PC-9 (cell line): ENCODE measurements at regions of chr9 and their contacts with region 1.

Region 1: GRCh38 chr9:127396808-127397497 is at the start of gene SLC2A8:
- DNase-seq: peak; percentile 98 to 100
- H3K4me3 ChIP-seq: peak within 1 kb of the TSS; percentile 68
- H3K27ac ChIP-seq: no peak within 1 kb of the TSS
- H3K4me1 ChIP-seq: no peaks in the 10 kb centered on the region; the same call in 1 of the 2 replicates
- H3K27me3 ChIP-seq: no peaks in the 10 kb centered on the region
- CTCF ChIP-seq: 0 out of 2 replicates have a peak, but pooled peaks have one; percentile 12
- total RNA-seq, gene SLC2A8: 19.1 and 24.6 TPM in 2 replicates

Region 2: GRCh38 chr9:126939821-126940221 is 457.1 kb before region 1 on chr9:
- CTCF ChIA-PET with region 1: interaction called, 5 read pairs
- POLR2A ChIA-PET with region 1: no interaction called
- intact Hi-C with region 1: loop called (anchors 2 kb)
- DNase-seq: no peak
- H3K4me3 ChIP-seq: no peak overlapping the region
- H3K27ac ChIP-seq: no peak overlapping the region
- H3K4me1 ChIP-seq: no peaks in the 10 kb centered on the region
- H3K27me3 ChIP-seq: no peaks in the 10 kb centered on the region
- CTCF ChIP-seq: no peak

Region 3: GRCh38 chr9:127214421-127215267 is 182.3 kb before region 1 on chr9:
- CTCF ChIA-PET with region 1: interaction called, 11 read pairs
- POLR2A ChIA-PET with region 1: no interaction called
- intact Hi-C with region 1: loop called (anchors 1 kb)
- DNase-seq: peak; percentile 49 to 75
- H3K4me3 ChIP-seq: no peak overlapping the region
- H3K27ac ChIP-seq: no peak overlapping the region
- H3K4me1 ChIP-seq: 0 out of 2 replicates have a peak, but pooled peaks cover 4% of the 10 kb centered on the region
- H3K27me3 ChIP-seq: no peaks in the 10 kb centered on the region
- CTCF ChIP-seq: peak; percentile 89

Region 4: DNA sequence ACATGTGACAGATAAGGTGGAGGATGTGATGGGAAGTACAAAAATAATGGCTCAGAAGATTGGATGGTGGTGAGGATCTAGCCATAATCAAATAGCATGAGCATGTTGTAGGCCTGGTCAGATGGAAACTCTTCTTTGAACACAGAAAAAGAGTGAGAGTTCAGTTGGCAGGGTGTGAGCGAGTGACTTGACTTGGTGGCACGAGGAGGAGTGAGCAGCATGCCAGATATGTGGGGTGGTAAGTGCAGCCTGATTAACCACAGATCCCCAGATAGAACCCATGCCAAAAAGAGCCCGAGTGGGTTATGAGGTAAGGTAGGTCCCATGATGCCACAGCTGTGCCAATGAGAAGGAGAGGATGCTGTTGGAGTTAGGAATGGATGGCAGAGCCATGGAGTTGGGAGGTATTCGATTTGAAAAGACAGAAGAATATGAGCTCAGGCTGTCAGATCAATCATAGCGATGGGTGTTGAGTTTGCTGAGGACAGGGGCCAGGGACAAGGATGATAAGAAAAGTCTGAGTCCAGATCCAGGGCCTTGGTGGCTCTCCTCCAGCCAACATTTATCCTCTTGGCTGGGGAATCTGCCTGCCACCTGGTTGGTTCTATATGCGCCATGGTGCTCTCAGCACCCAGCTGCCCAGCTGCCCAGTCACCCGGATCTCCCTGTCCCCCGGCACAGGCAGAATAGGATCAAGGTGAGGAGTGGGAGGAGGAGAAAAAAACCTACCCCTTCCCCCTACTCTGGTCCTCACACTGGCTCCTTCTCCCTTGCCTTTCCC is 115.9 kb before region 1 on chr9:
- CTCF ChIA-PET with region 1: interaction called, 12 read pairs
- POLR2A ChIA-PET with region 1: interaction called, 4 read pairs
- intact Hi-C with region 1: no loop called
- DNase-seq: no peak
- H3K4me3 ChIP-seq: no peak overlapping the region
- H3K27ac ChIP-seq: no peak overlapping the region
- H3K4me1 ChIP-seq: peaks cover 13% of the 10 kb centered on the region
- H3K27me3 ChIP-seq: no peaks in the 10 kb centered on the region
- CTCF ChIP-seq: no peak

Region 5: DNA sequence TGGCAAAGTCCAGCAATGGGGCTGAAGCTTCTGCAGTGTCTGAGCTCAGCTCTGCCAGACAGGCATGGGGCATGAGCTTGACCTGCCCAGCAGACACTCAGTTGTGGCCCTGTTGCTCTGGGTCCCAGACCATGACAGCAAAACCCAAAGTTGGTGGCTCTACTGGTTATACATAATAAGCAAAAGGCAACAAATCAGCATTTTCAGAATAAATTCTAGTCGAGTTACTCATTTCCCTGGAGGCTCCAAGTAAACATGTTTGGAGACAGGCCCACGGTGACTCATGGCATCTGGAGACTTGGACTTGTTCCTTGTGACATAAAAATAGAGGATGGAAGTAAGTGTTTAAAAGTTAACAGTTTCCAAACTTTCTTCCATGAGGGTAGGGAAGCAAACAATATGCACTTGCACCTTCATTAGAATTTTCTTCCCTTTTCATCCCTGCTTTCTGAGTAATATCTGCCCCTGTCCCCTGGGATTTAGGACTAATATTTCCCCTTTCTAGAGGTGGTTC is 60.2 kb before region 1 on chr9:
- CTCF ChIA-PET with region 1: interaction called, 10 read pairs
- POLR2A ChIA-PET with region 1: no interaction called
- intact Hi-C with region 1: no loop called
- DNase-seq: peak; percentile 76 to 95
- H3K4me3 ChIP-seq: peak overlapping the region; percentile 5; the same call in 1 of the 2 replicates
- H3K27ac ChIP-seq: peak overlapping the region; percentile 57
- H3K4me1 ChIP-seq: peaks cover 47% of the 10 kb centered on the region
- H3K27me3 ChIP-seq: no peaks in the 10 kb centered on the region
- CTCF ChIP-seq: no peak

Region 6: GRCh38 chr9:127438389-127438788 is 41.4 kb after region 1 on chr9:
- CTCF ChIA-PET with region 1: no interaction called
- POLR2A ChIA-PET with region 1: no interaction called
- intact Hi-C with region 1: no loop called
- DNase-seq: no peak
- H3K4me3 ChIP-seq: no peak overlapping the region
- H3K27ac ChIP-seq: no peak overlapping the region
- H3K4me1 ChIP-seq: no peaks in the 10 kb centered on the region
- H3K27me3 ChIP-seq: no peaks in the 10 kb centered on the region
- CTCF ChIP-seq: no peak